IMR-90 (cell line): ENCODE measurements at regions of chr5 and their contacts with region 1.

Region 1: GRCh38 chr5:138449501-138450239 is 10.8 kb downstream of the REEP2 start:
- DNase-seq: peak; percentile 75
- ATAC-seq: peak; percentile 97
- H3K4me3 ChIP-seq: no peak overlapping the region
- H3K27ac ChIP-seq: no peak overlapping the region
- H3K4me1 ChIP-seq: no peaks in the 10 kb centered on the region
- H3K27me3 ChIP-seq: no peaks in the 10 kb centered on the region; the same call in 1 of the 2 replicates
- CTCF ChIP-seq: peak; percentile 97
- POLR2A ChIP-seq: 0 out of 2 replicates have a peak, but pooled peaks have one; percentile 33
- RAD21 ChIP-seq: peak; percentile 90

Region 2: GRCh38 chr5:137320056-137321045 is 1129.3 kb before region 1 on chr5:
- CTCF ChIA-PET with region 1: no interaction called
- POLR2A ChIA-PET with region 1: no interaction called
- dilution Hi-C with region 1: no loop called
- in situ Hi-C with region 1: no loop called
- intact Hi-C with region 1: no loop called
- DNase-seq: peak; percentile 51
- ATAC-seq: peak; percentile 73; the same call in 1 of the 2 replicates
- H3K4me3 ChIP-seq: no peak overlapping the region
- H3K27ac ChIP-seq: no peak overlapping the region
- H3K4me1 ChIP-seq: no peaks in the 10 kb centered on the region
- H3K27me3 ChIP-seq: peaks cover 8% of the 10 kb centered on the region
- CTCF ChIP-seq: peak; percentile 82
- POLR2A ChIP-seq: no peak
- RAD21 ChIP-seq: peak; percentile 76

Region 3: GRCh38 chr5:138464008-138464387 is 14.3 kb after region 1 on chr5:
- CTCF ChIA-PET with region 1: interaction called, 10 read pairs
- POLR2A ChIA-PET with region 1: interaction called, 5 read pairs
- dilution Hi-C with region 1: no loop called
- in situ Hi-C with region 1: no loop called
- intact Hi-C with region 1: loop called (anchors 1 kb)
- DNase-seq: peak; percentile 93
- ATAC-seq: peak; percentile 45
- H3K4me3 ChIP-seq: peak overlapping the region; percentile 66
- H3K27ac ChIP-seq: peak overlapping the region; percentile 94
- H3K4me1 ChIP-seq: peaks cover 12% of the 10 kb centered on the region; the same call in 1 of the 2 replicates
- H3K27me3 ChIP-seq: no peaks in the 10 kb centered on the region
- CTCF ChIP-seq: no peak
- POLR2A ChIP-seq: no peak
- RAD21 ChIP-seq: no peak

Region 4: GRCh38 chr5:138482638-138483037 is 33.0 kb after region 1 on chr5:
- CTCF ChIA-PET with region 1: no interaction called
- POLR2A ChIA-PET with region 1: no interaction called
- dilution Hi-C with region 1: no loop called
- in situ Hi-C with region 1: no loop called
- intact Hi-C with region 1: no loop called
- DNase-seq: no peak
- ATAC-seq: no peak
- H3K4me3 ChIP-seq: no peak overlapping the region
- H3K27ac ChIP-seq: no peak overlapping the region
- H3K4me1 ChIP-seq: 0 out of 2 replicates have a peak, but pooled peaks cover 2% of the 10 kb centered on the region
- H3K27me3 ChIP-seq: peaks cover 5% of the 10 kb centered on the region; the same call in 1 of the 2 replicates
- CTCF ChIP-seq: no peak
- POLR2A ChIP-seq: no peak
- RAD21 ChIP-seq: no peak

Region 5: GRCh38 chr5:138503487-138504270 is 54.0 kb after region 1 on chr5:
- CTCF ChIA-PET with region 1: interaction called, 10 read pairs
- POLR2A ChIA-PET with region 1: no interaction called
- dilution Hi-C with region 1: no loop called
- in situ Hi-C with region 1: no loop called
- intact Hi-C with region 1: loop called (anchors 1 kb)
- DNase-seq: peak; percentile 75
- ATAC-seq: peak; percentile 77
- H3K4me3 ChIP-seq: no peak overlapping the region
- H3K27ac ChIP-seq: no peak overlapping the region
- H3K4me1 ChIP-seq: peaks cover 8% of the 10 kb centered on the region
- H3K27me3 ChIP-seq: no peaks in the 10 kb centered on the region
- CTCF ChIP-seq: peak; percentile 77
- POLR2A ChIP-seq: no peak
- RAD21 ChIP-seq: peak; percentile 76

Region 6: DNA sequence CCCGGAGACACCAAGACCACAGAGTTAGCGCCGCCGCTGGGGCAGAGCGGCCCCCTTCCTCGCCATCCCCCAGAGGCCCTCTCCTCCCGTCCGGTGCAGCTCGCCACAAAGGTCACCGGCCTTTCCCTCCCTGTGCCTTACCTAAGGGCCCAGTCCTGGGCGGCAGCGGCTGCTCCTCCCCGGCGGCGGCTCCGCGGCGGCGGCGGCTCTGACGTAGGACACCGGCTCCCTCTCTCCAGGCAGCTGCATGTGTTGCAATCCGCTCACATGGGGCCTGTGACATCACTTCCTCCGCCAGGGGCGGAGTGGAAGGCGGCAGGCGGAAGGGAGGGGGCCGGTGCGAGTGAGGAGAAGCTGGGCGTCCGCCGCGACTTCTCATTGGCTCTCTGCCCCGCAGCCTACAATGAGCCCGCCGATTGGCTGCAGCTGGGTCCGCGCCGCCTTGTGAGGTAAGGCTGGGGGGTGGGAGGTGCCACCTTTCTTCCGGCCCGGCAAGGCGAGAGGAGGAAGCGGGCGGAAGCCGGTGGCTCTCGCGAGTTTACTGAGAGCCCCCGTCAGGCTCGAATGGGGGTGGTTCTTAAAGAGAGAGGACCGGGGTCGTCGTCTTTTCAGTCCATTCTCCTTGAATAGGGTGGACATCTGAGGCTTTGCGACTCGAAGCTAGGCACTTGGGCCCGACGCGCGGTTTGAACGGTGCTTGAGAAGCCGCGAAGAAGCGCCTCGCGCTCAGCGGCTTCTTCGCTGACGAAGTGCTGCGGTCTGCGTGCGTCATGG is 93.5 kb after region 1 on chr5 and contains the start of gene ETF1:
- CTCF ChIA-PET with region 1: no interaction called
- POLR2A ChIA-PET with region 1: no interaction called
- dilution Hi-C with region 1: no loop called
- in situ Hi-C with region 1: no loop called
- intact Hi-C with region 1: loop called (anchors 1 kb)
- DNase-seq: peak; percentile 99
- ATAC-seq: peak; percentile 93
- H3K4me3 ChIP-seq: peak within 1 kb of the TSS; percentile 76
- H3K27ac ChIP-seq: peak within 1 kb of the TSS; percentile 92
- H3K4me1 ChIP-seq: peaks cover 6% of the 10 kb centered on the region
- H3K27me3 ChIP-seq: no peaks in the 10 kb centered on the region
- CTCF ChIP-seq: no peak
- POLR2A ChIP-seq: peak; percentile 92
- RAD21 ChIP-seq: no peak
- total RNA-seq, gene ETF1: 126 and 144 TPM in 2 replicates

Region 7: GRCh38 chr5:138696503-138697191 is 247.0 kb after region 1 on chr5:
- CTCF ChIA-PET with region 1: no interaction called
- POLR2A ChIA-PET with region 1: no interaction called
- dilution Hi-C with region 1: no loop called
- in situ Hi-C with region 1: no loop called
- intact Hi-C with region 1: no loop called
- DNase-seq: peak; percentile 94
- ATAC-seq: peak; percentile 96
- H3K4me3 ChIP-seq: no peak overlapping the region
- H3K27ac ChIP-seq: no peak overlapping the region
- H3K4me1 ChIP-seq: peaks cover 5% of the 10 kb centered on the region
- H3K27me3 ChIP-seq: 0 out of 2 replicates have a peak, but pooled peaks cover 2% of the 10 kb centered on the region
- CTCF ChIP-seq: no peak
- POLR2A ChIP-seq: no peak
- RAD21 ChIP-seq: no peak